ENCODE measurements at regions of chr6 and their contacts with region 1.

Region 1: GRCh38 chr6:55445648-55446204 is 118.5 kb downstream of the GFRAL start:
- DNase-seq: no peak
- H3K4me3 ChIP-seq: no peak overlapping the region
- H3K27ac ChIP-seq: no peak overlapping the region
- H3K4me1 ChIP-seq: no peaks in the 10 kb centered on the region
- H3K27me3 ChIP-seq: no peaks in the 10 kb centered on the region
- CTCF ChIP-seq: peak; percentile 11 to 46 (median 44)
- POLR2A ChIP-seq: no peak

Region 2: GRCh38 chr6:55011034-55011433 is 434.7 kb before region 1 on chr6:
- intact Hi-C with region 1: no loop called
- DNase-seq: no peak
- H3K4me3 ChIP-seq: no peak overlapping the region
- H3K27ac ChIP-seq: no peak overlapping the region
- H3K4me1 ChIP-seq: no peaks in the 10 kb centered on the region
- H3K27me3 ChIP-seq: no peaks in the 10 kb centered on the region
- CTCF ChIP-seq: no peak
- POLR2A ChIP-seq: no peak

Region 3: DNA sequence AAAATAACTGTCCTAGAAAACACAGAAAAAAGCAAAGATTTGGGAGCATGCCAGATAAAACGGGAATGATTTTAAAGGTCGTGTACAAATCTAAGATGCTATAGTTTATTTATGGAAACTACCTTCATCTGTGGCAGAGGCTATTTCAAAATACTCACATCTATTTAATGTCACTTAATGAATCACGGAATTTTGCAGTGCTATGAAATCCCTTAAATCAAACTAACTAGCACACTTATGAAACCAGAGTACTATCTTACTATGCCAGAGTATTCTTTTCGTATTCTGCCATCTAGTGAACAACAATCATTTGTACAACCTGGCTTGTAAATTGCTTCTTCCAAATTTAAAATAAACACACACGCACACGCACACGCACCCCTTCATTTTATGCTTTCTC is 507.6 kb after region 1 on chr6:
- intact Hi-C with region 1: loop called (anchors 10 kb)
- DNase-seq: no peak
- H3K4me3 ChIP-seq: no peak overlapping the region
- H3K27ac ChIP-seq: no peak overlapping the region
- H3K4me1 ChIP-seq: peaks cover 3% of the 10 kb centered on the region
- H3K27me3 ChIP-seq: no peaks in the 10 kb centered on the region
- CTCF ChIP-seq: peak in 2 of 3 experiments; percentile 34 to 51
- POLR2A ChIP-seq: no peak